ENCODE measurements at regions of chrX and their contacts with region 1.

Region 1: GRCh38 chrX:112851806-112852205 is 11.2 kb upstream of the AMOT start:
- DNase-seq: peak; percentile 63
- ATAC-seq: peak; percentile 79
- H3K4me3 ChIP-seq: peak overlapping the region; percentile 32; the same call in 1 of the 2 replicates
- H3K27ac ChIP-seq: peak overlapping the region; percentile 61; the same call in 1 of the 2 replicates
- H3K4me1 ChIP-seq: peaks cover 17% of the 10 kb centered on the region
- H3K27me3 ChIP-seq: no peaks in the 10 kb centered on the region
- CTCF ChIP-seq: no peak
- EP300 ChIP-seq: no peak
- POLR2A ChIP-seq: no peak
- RAD21 ChIP-seq: no peak

Region 2: DNA sequence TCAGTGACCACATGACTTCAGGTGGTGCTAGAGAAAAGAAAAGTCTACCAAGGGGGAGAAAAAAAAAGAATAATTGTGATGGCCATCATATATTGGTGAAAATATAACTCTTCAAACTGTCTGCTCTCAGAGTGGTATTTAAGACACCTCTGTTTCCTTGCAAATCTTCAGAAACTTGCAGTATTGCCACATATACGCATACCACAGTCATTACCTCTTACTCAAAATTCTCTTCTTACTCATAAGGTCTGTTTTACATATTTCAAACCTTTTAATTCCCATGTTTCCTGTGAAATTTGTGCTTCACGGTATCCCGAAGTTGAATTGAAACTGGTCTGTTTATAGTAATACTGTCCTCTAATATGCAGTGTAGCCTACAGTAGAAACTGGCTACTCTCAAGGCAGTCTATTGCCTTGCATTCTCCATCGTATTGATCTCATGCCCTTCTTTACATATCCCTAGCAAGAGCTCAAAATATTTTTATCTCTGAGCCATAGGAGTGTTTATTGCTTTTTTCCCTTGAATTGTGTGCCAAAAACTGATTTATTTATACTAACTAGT is 137.4 kb before region 1 on chrX:
- CTCF ChIA-PET with region 1: no interaction called
- POLR2A ChIA-PET with region 1: no interaction called
- RAD21 ChIA-PET with region 1: no interaction called
- SMC1A ChIA-PET with region 1: no interaction called
- in situ Hi-C with region 1: no loop called
- intact Hi-C with region 1: no loop called
- DNase-seq: no peak
- ATAC-seq: no peak
- H3K4me3 ChIP-seq: no peak overlapping the region
- H3K27ac ChIP-seq: no peak overlapping the region
- H3K4me1 ChIP-seq: no peaks in the 10 kb centered on the region
- H3K27me3 ChIP-seq: no peaks in the 10 kb centered on the region
- CTCF ChIP-seq: no peak
- EP300 ChIP-seq: no peak
- POLR2A ChIP-seq: no peak
- RAD21 ChIP-seq: no peak

Region 3: GRCh38 chrX:112841114-112841819 is 10.5 kb before region 1 on chrX:
- CTCF ChIA-PET with region 1: interaction called, 10 read pairs
- POLR2A ChIA-PET with region 1: interaction called, 6 read pairs
- RAD21 ChIA-PET with region 1: no interaction called
- SMC1A ChIA-PET with region 1: interaction called, 20 read pairs
- in situ Hi-C with region 1: no loop called
- intact Hi-C with region 1: no loop called
- DNase-seq: no peak
- ATAC-seq: peak; percentile 95
- H3K4me3 ChIP-seq: peak overlapping the region; percentile 80
- H3K27ac ChIP-seq: peak overlapping the region; percentile 35; the same call in 1 of the 2 replicates
- H3K4me1 ChIP-seq: no peaks in the 10 kb centered on the region; the same call in 1 of the 2 replicates
- H3K27me3 ChIP-seq: no peaks in the 10 kb centered on the region
- CTCF ChIP-seq: no peak
- EP300 ChIP-seq: no peak
- POLR2A ChIP-seq: no peak
- RAD21 ChIP-seq: no peak

Region 4: GRCh38 chrX:112866175-112866574 is 14.4 kb after region 1 on chrX:
- CTCF ChIA-PET with region 1: no interaction called
- POLR2A ChIA-PET with region 1: no interaction called
- RAD21 ChIA-PET with region 1: no interaction called
- SMC1A ChIA-PET with region 1: no interaction called
- in situ Hi-C with region 1: no loop called
- intact Hi-C with region 1: no loop called
- DNase-seq: no peak
- ATAC-seq: no peak
- H3K4me3 ChIP-seq: no peak overlapping the region
- H3K27ac ChIP-seq: no peak overlapping the region
- H3K4me1 ChIP-seq: no peaks in the 10 kb centered on the region
- H3K27me3 ChIP-seq: no peaks in the 10 kb centered on the region
- CTCF ChIP-seq: no peak
- EP300 ChIP-seq: no peak
- POLR2A ChIP-seq: no peak
- RAD21 ChIP-seq: no peak